GM12878 (cell line): ENCODE measurements at regions of chr22 and their contacts with region 1.

Region 1: GRCh38 chr22:46476547-46476941 is 60.9 kb downstream of the CELSR1 start:
- DNase-seq: peak; percentile 79
- ATAC-seq: peak; percentile 96
- H3K4me3 ChIP-seq: no peak overlapping the region
- H3K27ac ChIP-seq: no peak overlapping the region
- H3K4me1 ChIP-seq: no peaks in the 10 kb centered on the region
- H3K27me3 ChIP-seq: no peaks in the 10 kb centered on the region; a peak in 1 of 4 replicates
- CTCF ChIP-seq: no peak
- EP300 ChIP-seq: peak; percentile 40 to 63; a peak in 1 of 4 replicates
- POLR2A ChIP-seq: no peak
- RAD21 ChIP-seq: no peak

Region 2: DNA sequence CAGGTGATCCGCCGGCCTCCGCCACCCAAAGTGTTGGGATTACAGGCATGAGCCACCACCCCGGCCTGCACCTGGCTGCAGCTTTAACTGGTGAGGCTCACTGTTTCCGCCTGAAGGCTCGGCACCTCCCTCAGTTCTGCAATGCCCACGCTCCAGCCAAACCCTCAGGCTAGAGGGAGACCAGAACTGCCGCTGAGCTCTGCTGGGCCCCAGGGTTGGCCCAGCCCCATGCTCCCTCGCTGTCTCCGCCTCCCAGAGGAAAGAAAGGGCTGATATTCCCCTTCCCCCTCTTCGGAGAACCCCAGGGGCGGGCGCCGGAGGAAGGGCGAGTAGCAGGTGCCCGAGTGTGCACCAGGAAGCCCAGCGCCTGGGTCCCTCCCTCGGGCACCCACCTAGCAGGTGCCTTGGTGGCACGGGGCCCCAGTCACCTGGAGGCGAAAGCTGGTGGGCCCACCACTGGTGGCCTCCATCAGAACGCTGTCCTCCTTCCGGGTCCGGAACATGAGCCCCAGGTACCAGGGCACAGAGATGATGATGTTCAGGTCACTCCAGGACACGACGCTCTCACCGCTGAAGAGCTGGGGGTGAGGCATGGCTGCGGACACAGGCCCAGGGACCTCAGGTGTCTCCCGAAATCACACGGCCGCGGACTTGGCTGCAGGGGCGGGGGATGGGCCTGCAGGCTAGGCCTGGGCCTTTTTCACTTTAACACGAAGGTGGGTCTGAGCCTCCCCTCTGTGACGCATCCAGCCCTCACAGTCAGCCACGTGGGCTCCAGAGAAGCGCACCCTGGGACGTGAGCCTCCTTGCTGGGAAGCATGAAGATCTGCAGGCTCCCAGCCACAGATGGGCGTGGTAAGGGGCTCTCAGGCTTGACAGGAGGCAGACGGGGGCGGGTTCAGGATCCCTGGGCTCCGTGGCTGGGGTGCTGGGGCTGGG is 67.7 kb before region 1 on chr22:
- CTCF ChIA-PET with region 1: no interaction called
- POLR2A ChIA-PET with region 1: no interaction called
- RAD21 ChIA-PET with region 1: no interaction called
- SMC1A ChIA-PET with region 1: no interaction called
- in situ Hi-C with region 1: no loop called
- intact Hi-C with region 1: no loop called
- DNase-seq: no peak
- ATAC-seq: no peak
- H3K4me3 ChIP-seq: no peak overlapping the region
- H3K27ac ChIP-seq: no peak overlapping the region
- H3K4me1 ChIP-seq: no peaks in the 10 kb centered on the region
- H3K27me3 ChIP-seq: no peaks in the 10 kb centered on the region
- CTCF ChIP-seq: no peak
- EP300 ChIP-seq: no peak
- POLR2A ChIP-seq: no peak
- RAD21 ChIP-seq: no peak

Region 3: DNA sequence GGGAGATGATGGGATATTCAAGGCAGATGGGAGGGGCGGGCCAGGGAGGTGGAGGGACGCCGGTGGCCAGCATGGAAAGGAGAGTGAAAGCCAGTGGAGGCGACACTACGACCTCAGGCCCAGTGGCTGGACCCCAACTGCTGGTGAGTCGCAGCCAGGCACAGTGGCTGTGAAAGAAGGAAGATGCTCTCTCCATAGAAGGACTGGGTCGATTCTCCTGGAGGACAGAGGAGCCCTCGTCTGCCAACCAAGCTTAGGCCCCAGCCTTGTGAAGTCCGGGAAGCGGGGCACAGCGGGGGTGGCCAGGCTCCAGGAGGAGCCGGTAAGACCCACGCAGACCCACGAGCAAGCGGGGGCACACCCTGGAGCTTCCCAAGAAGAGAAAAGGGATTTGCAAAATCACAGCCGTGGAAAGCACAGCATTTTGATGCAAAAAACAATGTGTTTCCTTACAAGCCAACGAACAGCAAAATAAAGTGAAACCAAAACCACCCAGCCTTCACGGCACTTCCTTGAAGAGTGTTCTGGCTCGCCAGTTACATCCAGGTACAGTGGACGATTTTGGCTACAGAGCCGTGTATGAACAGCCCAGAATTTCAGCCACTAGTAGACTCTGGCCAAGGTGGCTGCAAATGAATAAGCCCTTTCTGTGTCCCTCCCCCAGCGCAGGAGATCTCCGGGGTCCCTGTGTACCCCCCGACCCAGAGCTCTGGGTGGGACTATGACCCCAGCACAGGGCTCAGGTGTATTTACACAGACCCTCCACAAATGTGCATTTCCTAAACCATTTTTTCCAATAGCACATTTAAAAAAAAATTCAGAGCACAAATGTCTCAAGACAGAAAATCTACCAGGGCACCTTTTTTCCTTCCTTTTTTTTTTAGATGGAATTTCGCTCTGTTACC is 44.1 kb before region 1 on chr22:
- CTCF ChIA-PET with region 1: no interaction called
- POLR2A ChIA-PET with region 1: no interaction called
- RAD21 ChIA-PET with region 1: no interaction called
- SMC1A ChIA-PET with region 1: no interaction called
- in situ Hi-C with region 1: no loop called
- intact Hi-C with region 1: loop called (anchors 5 kb)
- DNase-seq: no peak
- ATAC-seq: peak; percentile 82
- H3K4me3 ChIP-seq: peak overlapping the region; percentile 68
- H3K27ac ChIP-seq: peak overlapping the region; percentile 35
- H3K4me1 ChIP-seq: peaks cover 16% of the 10 kb centered on the region
- H3K27me3 ChIP-seq: no peaks in the 10 kb centered on the region
- CTCF ChIP-seq: no peak
- EP300 ChIP-seq: no peak
- POLR2A ChIP-seq: no peak
- RAD21 ChIP-seq: no peak